Activated naive CD4-positive, alpha-beta T cell treated with anti-CD3 and anti-CD28 coated beads for 36 hours (primary cell): ENCODE measurements at regions of chr2 and their contacts with region 1.

Region 1: DNA sequence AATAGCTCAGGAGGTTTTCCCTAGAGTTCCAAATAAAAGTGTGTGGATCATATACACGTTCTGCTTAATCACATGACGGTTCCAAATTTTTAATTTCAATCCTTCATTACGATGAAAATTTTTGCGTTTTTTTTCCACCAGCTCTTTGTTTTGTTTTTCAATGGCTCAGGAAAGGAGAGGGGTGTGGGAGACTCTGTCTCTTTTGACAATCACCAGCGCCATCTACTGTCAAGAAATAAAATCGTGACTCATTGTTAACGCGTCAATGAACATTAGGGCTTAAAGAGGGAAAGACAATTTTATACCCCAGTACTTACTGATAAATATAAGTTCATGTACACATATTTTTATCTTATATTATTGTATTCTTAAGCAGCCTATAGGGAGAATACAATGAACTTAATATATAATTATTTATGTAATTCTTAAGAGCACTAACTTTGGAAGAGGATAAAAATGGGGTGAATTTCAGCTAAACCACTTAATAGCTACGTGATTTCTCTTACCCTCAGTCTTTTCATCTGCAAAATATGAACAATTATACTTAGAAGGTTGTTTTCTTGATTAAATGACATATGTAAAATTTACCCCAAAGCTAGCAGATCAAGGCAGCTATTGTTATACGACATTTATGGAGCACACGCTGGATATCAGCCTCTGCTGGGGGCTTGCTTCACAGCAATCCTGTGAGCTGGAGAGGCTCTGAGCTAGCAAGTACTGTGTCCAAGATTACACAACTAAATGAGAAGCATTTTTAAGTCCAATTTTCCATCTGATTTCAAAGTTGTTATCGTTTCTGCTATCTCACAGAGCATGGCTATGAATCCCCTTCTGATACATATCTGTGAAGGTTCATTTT is 47.4 kb upstream of the RMDN2 start:
- DNase-seq: peak; percentile 55
- H3K4me3 Mint-ChIP-seq: no peak overlapping the region
- H3K27ac Mint-ChIP-seq: no peak overlapping the region
- H3K4me1 Mint-ChIP-seq: peaks cover 7% of the 10 kb centered on the region
- H3K27me3 Mint-ChIP-seq: peaks cover 15% of the 10 kb centered on the region

Region 2: GRCh38 chr2:37168217-37168981 is 709.3 kb before region 1 on chr2:
- CTCF ChIA-PET with region 1: interaction called, 10 read pairs
- intact Hi-C with region 1: loop called (anchors 1 kb)
- DNase-seq: peak; percentile 52
- H3K4me3 Mint-ChIP-seq: no peak overlapping the region
- H3K27ac Mint-ChIP-seq: no peak overlapping the region
- H3K4me1 Mint-ChIP-seq: no peaks in the 10 kb centered on the region
- H3K27me3 Mint-ChIP-seq: no peaks in the 10 kb centered on the region

Region 3: GRCh38 chr2:37523814-37524362 is 353.8 kb before region 1 on chr2:
- CTCF ChIA-PET with region 1: interaction called, 12 read pairs
- intact Hi-C with region 1: no loop called
- DNase-seq: no peak
- H3K4me3 Mint-ChIP-seq: no peak overlapping the region
- H3K27ac Mint-ChIP-seq: no peak overlapping the region
- H3K4me1 Mint-ChIP-seq: no peaks in the 10 kb centered on the region
- H3K27me3 Mint-ChIP-seq: no peaks in the 10 kb centered on the region

Region 4: DNA sequence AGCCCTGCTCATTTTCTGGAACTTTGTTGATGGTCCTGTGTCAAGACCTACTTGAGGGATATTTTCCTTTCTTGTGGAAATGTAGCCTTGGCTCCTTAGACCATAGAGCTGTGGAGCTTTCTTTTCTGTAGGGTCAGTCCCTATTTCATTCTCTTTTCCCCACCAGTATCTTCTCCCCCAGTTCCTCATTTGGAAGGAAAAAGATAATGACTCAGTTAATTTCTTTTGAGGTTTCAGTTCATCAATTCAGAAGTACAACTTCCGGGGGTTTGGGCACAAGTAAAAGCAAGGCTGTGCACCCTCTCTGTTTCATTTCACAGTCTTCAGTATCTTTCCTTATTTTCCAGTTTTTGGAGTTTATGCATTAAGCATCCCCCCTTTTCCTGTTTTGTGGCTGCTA is 277.0 kb before region 1 on chr2:
- CTCF ChIA-PET with region 1: no interaction called
- intact Hi-C with region 1: no loop called
- DNase-seq: no peak
- H3K4me3 Mint-ChIP-seq: no peak overlapping the region
- H3K27ac Mint-ChIP-seq: no peak overlapping the region
- H3K4me1 Mint-ChIP-seq: peaks cover 27% of the 10 kb centered on the region
- H3K27me3 Mint-ChIP-seq: no peaks in the 10 kb centered on the region

Region 5: DNA sequence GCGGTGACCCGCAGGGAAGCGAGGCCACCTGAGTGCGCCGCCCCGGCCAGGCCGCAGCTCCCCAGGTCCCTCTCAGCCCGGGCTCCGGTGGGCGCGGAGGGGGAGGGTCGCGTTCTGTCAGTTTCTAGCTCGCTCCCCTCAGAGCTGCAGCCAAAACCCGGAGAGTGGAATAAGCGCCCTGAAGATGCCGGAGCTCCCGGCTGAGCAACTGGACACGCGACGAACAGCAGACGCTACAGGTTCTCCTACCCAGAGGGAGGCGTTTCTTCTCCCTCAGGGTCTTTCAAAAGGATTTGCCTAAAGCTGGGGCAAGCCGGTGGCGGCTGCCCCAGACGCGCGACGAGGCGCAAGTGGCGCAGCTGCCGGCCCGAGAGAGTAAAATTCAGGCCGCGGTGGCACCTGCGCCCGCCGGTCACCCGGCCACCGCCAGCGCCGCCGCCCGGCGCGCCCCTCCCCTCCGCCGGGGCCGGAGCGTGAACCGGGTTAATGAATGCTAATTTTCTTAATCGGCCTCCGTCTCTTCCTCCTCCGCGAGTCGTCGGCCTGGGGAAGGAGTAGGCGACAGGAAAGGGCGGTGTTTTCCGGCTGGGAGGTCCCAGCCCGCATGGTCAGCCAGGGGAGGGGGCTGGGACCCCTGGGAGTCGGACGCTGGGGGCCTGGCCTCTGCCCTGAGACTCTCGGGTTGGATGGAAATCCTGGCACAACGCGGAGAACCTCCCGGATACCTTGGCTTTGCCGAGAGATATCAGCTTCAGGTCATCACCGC is 205.4 kb before region 1 on chr2:
- CTCF ChIA-PET with region 1: interaction called, 5 read pairs
- intact Hi-C with region 1: loop called (anchors 2 kb)
- DNase-seq: peak; percentile 71
- H3K4me3 Mint-ChIP-seq: peak overlapping the region; percentile 75
- H3K27ac Mint-ChIP-seq: peak overlapping the region; percentile 63
- H3K4me1 Mint-ChIP-seq: peaks cover 40% of the 10 kb centered on the region
- H3K27me3 Mint-ChIP-seq: no peaks in the 10 kb centered on the region

Region 6: DNA sequence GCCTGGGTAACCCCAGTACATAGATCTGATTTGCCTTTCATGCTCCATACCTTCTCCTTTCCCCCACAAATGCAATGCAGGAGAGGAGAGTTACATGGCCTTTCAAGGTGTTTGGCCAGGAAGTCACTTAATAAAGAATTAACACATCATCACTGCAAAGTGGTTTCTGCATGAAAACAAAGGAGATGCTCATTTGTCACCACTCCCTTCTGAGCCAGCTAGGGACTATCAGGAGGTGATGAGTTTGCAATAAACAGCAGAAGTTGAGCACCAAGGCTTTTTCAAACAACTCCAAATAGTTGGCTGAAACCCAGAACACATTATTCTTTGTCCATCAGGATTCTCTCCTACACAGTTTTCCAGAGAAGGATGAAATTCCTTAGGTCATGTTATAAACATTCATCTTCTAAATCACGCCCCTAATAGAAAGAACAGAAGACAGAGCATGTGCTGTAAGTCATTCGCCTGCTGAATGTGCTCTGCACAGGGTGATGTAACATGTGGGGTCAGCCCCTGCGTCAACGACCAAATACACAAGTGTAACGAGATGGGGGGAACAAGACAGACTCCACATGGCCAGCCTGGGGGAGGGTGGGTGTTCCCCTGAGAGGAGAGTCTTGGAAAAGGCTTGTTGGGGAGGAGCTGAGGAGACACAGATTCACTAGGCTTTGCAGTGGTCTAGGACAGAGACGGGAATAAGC is 39.9 kb before region 1 on chr2:
- CTCF ChIA-PET with region 1: interaction called, 58 read pairs
- intact Hi-C with region 1: loop called (anchors 1 kb)
- DNase-seq: no peak
- H3K4me3 Mint-ChIP-seq: no peak overlapping the region
- H3K27ac Mint-ChIP-seq: no peak overlapping the region
- H3K4me1 Mint-ChIP-seq: peaks cover 11% of the 10 kb centered on the region
- H3K27me3 Mint-ChIP-seq: peaks cover 4% of the 10 kb centered on the region

Region 7: GRCh38 chr2:37890893-37891495 is 13.3 kb after region 1 on chr2:
- CTCF ChIA-PET with region 1: interaction called, 54 read pairs
- intact Hi-C with region 1: no loop called
- DNase-seq: peak; percentile 81
- H3K4me3 Mint-ChIP-seq: no peak overlapping the region
- H3K27ac Mint-ChIP-seq: no peak overlapping the region
- H3K4me1 Mint-ChIP-seq: peaks cover 34% of the 10 kb centered on the region
- H3K27me3 Mint-ChIP-seq: peaks cover 2% of the 10 kb centered on the region

Region 8: DNA sequence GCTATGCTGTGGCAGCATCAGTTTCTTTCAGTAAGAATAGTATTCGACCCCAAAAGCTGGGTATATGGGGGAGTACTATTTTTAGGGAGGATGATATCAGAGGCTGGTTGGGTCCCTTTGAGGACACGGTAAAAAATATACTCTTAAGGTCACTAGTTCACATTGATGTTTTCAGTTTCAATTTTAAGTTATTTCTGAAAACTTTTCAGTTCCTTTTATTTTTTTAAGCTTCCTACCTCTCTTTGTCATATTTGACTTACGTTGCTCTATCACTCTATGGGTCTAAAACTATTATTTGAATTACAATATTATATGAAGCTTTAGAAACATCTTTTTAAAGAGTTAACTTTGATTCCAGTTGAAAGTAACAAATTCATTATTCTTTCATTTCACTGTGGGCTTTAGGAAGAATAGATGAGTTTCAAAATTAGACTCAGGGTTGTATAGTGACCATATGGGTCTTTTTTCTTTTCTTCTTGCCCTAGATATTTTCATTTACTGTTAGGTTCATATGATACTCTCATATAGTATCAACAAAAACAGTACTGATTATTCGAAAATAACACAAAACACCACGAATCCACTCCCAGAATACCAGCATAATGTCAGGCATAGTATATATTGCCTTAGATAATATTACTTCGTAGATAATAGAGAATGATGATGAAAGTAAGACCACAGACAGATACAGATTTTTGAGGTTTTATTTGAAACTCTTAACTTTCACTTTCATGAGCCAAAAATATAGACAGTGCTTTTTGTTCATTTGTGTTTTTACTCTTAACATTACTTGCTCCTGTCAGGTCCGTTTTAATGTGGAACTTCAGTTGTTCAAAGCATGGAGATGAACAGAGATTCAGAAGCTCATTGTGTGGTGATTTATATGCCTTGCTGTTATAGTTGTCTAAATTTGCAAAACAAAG is 57.2 kb after region 1 on chr2:
- CTCF ChIA-PET with region 1: no interaction called
- intact Hi-C with region 1: no loop called
- DNase-seq: no peak
- H3K4me3 Mint-ChIP-seq: peak overlapping the region; percentile 42
- H3K27ac Mint-ChIP-seq: no peak overlapping the region
- H3K4me1 Mint-ChIP-seq: peaks cover 25% of the 10 kb centered on the region
- H3K27me3 Mint-ChIP-seq: peaks cover 2% of the 10 kb centered on the region

Region 9: GRCh38 chr2:37973615-37974353 is 96.1 kb after region 1 on chr2:
- CTCF ChIA-PET with region 1: no interaction called
- intact Hi-C with region 1: no loop called
- DNase-seq: no peak
- H3K4me3 Mint-ChIP-seq: no peak overlapping the region
- H3K27ac Mint-ChIP-seq: no peak overlapping the region
- H3K4me1 Mint-ChIP-seq: no peaks in the 10 kb centered on the region
- H3K27me3 Mint-ChIP-seq: no peaks in the 10 kb centered on the region